IMR-90 (cell line): ENCODE measurements at regions of chr3 and their contacts with region 1.

Region 1: DNA sequence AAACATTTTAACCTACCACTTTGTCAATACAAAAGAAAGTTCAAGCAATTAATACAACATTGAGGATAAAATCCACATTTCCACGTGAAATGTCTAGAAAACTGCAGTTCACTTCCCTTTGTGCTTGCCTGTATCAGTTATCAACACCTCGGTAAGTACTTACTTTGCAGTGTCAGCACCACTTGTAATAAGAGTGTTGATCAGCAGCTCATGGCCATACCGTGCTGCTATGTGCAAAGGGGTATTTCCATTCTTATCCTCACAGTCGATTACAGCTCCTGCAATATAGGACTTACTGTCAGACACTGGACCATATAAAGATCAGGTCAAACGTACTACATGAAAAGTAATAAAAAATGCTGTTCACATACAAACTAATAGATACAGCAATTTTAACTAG is 84.4 kb downstream of the ANKRD28 start:
- DNase-seq: no peak
- ATAC-seq: no peak
- H3K4me3 ChIP-seq: no peak overlapping the region
- H3K27ac ChIP-seq: no peak overlapping the region
- H3K4me1 ChIP-seq: peaks cover 5% of the 10 kb centered on the region
- H3K27me3 ChIP-seq: no peaks in the 10 kb centered on the region
- CTCF ChIP-seq: no peak
- POLR2A ChIP-seq: no peak
- RAD21 ChIP-seq: no peak

Region 2: GRCh38 chr3:15453806-15454625 is 259.3 kb before region 1 on chr3:
- CTCF ChIA-PET with region 1: no interaction called
- POLR2A ChIA-PET with region 1: no interaction called
- dilution Hi-C with region 1: no loop called
- in situ Hi-C with region 1: no loop called
- intact Hi-C with region 1: no loop called
- DNase-seq: no peak
- ATAC-seq: no peak
- H3K4me3 ChIP-seq: no peak overlapping the region
- H3K27ac ChIP-seq: no peak overlapping the region
- H3K4me1 ChIP-seq: no peaks in the 10 kb centered on the region
- H3K27me3 ChIP-seq: no peaks in the 10 kb centered on the region; the same call in 1 of the 2 replicates
- CTCF ChIP-seq: no peak
- POLR2A ChIP-seq: no peak
- RAD21 ChIP-seq: no peak

Region 3: GRCh38 chr3:15673536-15673935 is 39.8 kb before region 1 on chr3:
- CTCF ChIA-PET with region 1: no interaction called
- POLR2A ChIA-PET with region 1: no interaction called
- dilution Hi-C with region 1: no loop called
- in situ Hi-C with region 1: no loop called
- intact Hi-C with region 1: loop called (anchors 5 kb)
- DNase-seq: no peak
- ATAC-seq: no peak
- H3K4me3 ChIP-seq: no peak overlapping the region
- H3K27ac ChIP-seq: no peak overlapping the region; the same call in 1 of the 2 replicates
- H3K4me1 ChIP-seq: no peaks in the 10 kb centered on the region
- H3K27me3 ChIP-seq: no peaks in the 10 kb centered on the region
- CTCF ChIP-seq: no peak
- POLR2A ChIP-seq: no peak
- RAD21 ChIP-seq: no peak